Activated CD8-positive, alpha-beta memory T cell treated with anti-CD3 and anti-CD28 coated beads, Interleukin-2, amount 10 ng/mL, durations not matched to agents 7 days and 5 days (primary cell): ENCODE measurements at regions of chr16 and their contacts with region 1.

Region 1: GRCh38 chr16:2867987-2868789 is 10.2 kb upstream of the PRSS22 start:
- DNase-seq: peak; percentile 98
- ATAC-seq: peak; percentile 96
- H3K4me3 Mint-ChIP-seq: peak overlapping the region; percentile 83
- H3K27ac Mint-ChIP-seq: peak overlapping the region; percentile 91
- H3K4me1 Mint-ChIP-seq: peaks cover 13% of the 10 kb centered on the region
- H3K27me3 Mint-ChIP-seq: peaks cover 3% of the 10 kb centered on the region

Region 2: DNA sequence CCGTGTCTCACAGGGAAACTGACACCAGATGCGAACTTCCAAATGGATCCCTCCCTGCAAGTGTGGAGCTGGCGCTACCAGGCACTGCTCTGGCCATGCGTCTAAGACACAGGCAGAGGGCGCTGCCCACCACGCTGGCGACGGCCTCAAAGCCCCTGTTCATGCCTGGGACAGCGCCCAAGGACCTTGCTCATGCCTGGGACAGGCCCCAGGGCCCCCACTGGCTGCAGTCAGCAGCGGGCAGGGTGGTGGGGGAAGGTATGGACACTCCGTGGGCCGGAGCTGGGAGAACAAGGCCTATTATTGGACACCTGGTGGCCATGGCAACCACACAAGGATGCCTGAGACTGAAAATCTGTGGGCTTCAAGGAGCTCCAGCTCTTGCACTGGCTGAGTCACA is 29.3 kb before region 1 on chr16:
- CTCF ChIA-PET with region 1: interaction called, 94 read pairs
- DNase-seq: peak; percentile 74
- ATAC-seq: peak; percentile 82
- H3K4me3 Mint-ChIP-seq: no peak overlapping the region
- H3K27ac Mint-ChIP-seq: no peak overlapping the region
- H3K4me1 Mint-ChIP-seq: peaks cover 24% of the 10 kb centered on the region
- H3K27me3 Mint-ChIP-seq: peaks cover 5% of the 10 kb centered on the region

Region 3: DNA sequence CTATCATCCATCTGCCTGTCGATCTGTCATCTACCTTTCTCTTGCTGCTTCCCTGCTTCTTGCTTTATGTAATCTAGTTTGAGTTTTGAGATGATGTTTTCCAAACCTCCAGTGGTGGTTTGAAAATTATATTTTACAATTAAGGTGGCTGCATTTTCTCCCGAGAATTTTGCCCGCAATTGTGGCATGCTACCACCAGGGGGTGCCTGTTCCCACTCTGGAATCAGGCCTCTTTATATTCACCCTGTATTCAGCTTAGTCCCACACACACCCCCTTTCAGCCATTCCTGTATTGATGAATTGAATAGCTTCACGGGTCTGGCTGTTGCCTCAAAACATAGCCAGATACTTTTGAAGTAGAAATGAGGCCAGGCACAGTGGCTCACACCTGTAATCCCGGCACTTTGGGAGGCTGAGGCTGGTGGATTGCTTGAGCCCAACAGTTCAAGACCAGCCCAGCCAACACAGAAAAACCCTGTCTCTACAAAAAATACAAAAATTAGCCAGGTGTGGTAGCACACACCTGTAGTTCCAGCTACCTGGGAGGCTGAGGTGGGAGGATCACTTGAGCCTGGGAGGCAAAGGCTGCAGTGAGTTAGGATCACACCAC is 13.4 kb before region 1 on chr16:
- CTCF ChIA-PET with region 1: interaction called, 14 read pairs
- DNase-seq: no peak
- ATAC-seq: no peak
- H3K4me3 Mint-ChIP-seq: no peak overlapping the region
- H3K27ac Mint-ChIP-seq: no peak overlapping the region
- H3K4me1 Mint-ChIP-seq: peaks cover 4% of the 10 kb centered on the region
- H3K27me3 Mint-ChIP-seq: peaks cover 9% of the 10 kb centered on the region

Region 4: DNA sequence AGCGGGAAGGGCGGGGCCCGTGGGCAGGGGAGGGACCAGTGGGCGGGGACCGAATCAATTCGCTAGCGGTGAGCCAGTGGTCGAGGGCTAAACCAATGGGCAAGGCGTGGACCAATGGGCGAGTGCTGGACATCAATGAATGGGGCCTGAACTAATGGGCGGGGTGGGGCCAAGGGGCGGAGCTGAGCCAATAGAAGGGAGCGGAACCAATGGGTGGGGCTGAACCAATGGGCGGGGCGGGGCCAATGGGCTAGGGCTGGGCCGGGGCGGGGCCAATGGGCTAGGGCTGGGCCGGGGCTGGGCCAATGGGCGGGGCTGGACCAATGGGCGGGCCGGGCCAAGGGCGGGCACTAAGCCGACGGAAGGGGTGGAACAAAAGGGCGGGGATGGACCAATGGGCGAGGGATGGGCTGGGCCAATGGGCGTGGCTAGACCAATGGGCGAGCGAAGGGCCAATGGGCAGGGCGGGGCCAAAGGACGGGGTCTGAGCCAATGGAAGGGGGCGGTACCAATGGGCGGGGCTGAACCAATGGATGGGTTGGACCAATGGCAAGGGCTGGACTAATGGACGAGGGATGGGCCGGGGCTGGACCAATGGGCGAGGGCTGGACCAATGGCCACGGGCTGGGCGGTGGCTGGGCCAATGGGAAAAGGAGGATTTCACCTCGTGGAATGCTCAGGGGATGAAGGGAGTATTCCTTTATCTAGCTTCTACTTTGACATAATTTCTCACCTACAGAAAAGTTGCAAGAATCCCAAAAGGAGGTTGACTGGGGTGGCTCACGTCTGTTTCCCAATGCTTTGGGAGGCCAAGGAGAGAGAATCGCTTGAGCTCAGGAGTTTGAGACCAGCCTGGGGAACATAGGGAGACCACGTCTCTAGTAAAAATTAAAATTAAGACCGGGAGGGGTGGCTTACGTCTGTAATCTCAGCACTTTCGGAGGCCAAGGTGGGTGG is 37.5 kb after region 1 on chr16:
- CTCF ChIA-PET with region 1: interaction called, 20 read pairs
- DNase-seq: peak; percentile 99
- ATAC-seq: peak; percentile 81
- H3K4me3 Mint-ChIP-seq: peak overlapping the region; percentile 94
- H3K27ac Mint-ChIP-seq: peak overlapping the region; percentile 91
- H3K4me1 Mint-ChIP-seq: peaks cover 22% of the 10 kb centered on the region
- H3K27me3 Mint-ChIP-seq: peaks cover 5% of the 10 kb centered on the region

Region 5: GRCh38 chr16:2919511-2920255 is 51.5 kb after region 1 on chr16:
- CTCF ChIA-PET with region 1: interaction called, 19 read pairs
- DNase-seq: peak; percentile 77
- ATAC-seq: peak; percentile 63
- H3K4me3 Mint-ChIP-seq: no peak overlapping the region
- H3K27ac Mint-ChIP-seq: peak overlapping the region; percentile 54
- H3K4me1 Mint-ChIP-seq: peaks cover 18% of the 10 kb centered on the region
- H3K27me3 Mint-ChIP-seq: no peaks in the 10 kb centered on the region